WTC11 (cell line): ENCODE measurements at regions of chr12 and their contacts with region 1.

Region 1: DNA sequence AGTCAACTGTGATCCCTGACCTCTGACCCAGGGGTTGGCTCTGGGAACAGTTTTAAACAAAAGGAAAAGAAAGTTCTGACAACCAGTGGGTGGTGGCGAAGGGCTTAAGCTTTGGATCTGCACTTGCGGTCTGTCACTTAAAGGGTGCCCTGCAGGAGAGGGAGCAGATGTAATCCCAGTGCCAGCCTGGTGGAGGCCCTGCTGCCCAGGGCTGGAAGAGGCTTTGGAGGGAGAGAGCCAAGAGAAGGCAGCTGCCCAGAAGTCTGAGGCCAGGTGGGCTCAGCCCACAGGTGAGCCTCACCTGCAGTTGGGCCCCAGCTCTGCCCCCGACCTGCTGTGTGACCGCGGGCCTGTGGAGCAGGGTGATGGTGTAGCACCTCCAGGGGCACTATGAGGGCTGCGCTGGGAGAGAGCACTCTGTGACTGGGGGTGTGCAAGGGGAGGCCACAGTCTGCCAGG is 19.1 kb downstream of the SH2B3 start:
- DNase-seq: no peak
- ATAC-seq: peak; percentile 82
- H3K4me3 Mint-ChIP-seq: no peak overlapping the region
- H3K27ac Mint-ChIP-seq: peak overlapping the region; percentile 57
- H3K4me1 Mint-ChIP-seq: peaks cover 45% of the 10 kb centered on the region
- H3K27me3 Mint-ChIP-seq: no peaks in the 10 kb centered on the region
- CTCF ChIP-seq: 0 out of 2 replicates have a peak, but pooled peaks have one; percentile 11

Region 2: DNA sequence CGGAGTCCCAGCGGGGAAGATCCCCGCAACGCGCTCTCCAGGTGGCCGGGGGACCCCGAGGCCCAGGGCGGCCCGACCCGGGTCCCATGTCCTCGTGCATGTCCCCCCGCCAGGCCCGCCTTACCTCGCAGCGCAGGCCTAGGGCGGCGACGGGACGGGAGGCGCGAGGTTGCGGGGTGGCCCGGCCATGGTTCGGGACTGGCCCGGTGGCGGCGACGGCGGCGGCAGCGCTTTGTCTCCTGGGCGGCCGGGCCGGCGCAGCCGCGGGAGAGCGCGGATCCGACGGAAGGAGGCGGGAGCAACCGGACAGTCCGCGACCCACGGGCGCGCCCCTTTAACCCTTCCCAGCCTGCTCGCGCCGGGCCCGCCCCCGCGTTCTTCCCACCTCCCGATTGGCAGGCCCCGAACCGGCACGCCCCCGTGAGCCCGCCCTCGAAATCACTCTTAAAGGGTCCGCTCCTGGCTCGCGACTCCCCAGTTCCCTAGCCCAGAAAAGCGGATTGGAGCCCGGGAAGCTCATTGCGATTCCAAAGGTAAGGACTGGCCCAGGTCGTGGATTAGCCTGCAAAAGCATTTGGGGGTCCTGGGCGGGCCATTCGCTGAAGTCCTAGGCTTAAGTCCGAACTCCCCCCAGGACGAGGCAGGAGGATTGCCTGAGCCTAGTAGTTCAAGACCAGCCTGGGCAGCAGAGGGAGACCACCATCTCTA is 55.9 kb before region 1 on chr12 and contains the start of gene PHETA1:
- CTCF ChIA-PET with region 1: no interaction called
- POLR2A ChIA-PET with region 1: no interaction called
- DNase-seq: peak; percentile 95
- ATAC-seq: peak; percentile 94
- H3K4me3 Mint-ChIP-seq: peak within 1 kb of the TSS; percentile 72
- H3K27ac Mint-ChIP-seq: 0 out of 2 replicates have a peak within 1 kb of the TSS, but pooled peaks have one; percentile 27
- H3K4me1 Mint-ChIP-seq: peaks cover 10% of the 10 kb centered on the region
- H3K27me3 Mint-ChIP-seq: peaks cover 30% of the 10 kb centered on the region
- CTCF ChIP-seq: no peak
- total RNA-seq, gene PHETA1: 12.4 to 18.6 TPM (median 14.9 TPM) in 3 replicates

Region 3: GRCh38 chr12:111444925-111445725 is 20.3 kb after region 1 on chr12:
- CTCF ChIA-PET with region 1: interaction called, 24 read pairs
- POLR2A ChIA-PET with region 1: interaction called, 3 read pairs
- DNase-seq: no peak
- ATAC-seq: peak; percentile 25
- H3K4me3 Mint-ChIP-seq: no peak overlapping the region
- H3K27ac Mint-ChIP-seq: peak overlapping the region; percentile 94
- H3K4me1 Mint-ChIP-seq: peaks cover 22% of the 10 kb centered on the region
- H3K27me3 Mint-ChIP-seq: no peaks in the 10 kb centered on the region
- CTCF ChIP-seq: no peak

Region 4: DNA sequence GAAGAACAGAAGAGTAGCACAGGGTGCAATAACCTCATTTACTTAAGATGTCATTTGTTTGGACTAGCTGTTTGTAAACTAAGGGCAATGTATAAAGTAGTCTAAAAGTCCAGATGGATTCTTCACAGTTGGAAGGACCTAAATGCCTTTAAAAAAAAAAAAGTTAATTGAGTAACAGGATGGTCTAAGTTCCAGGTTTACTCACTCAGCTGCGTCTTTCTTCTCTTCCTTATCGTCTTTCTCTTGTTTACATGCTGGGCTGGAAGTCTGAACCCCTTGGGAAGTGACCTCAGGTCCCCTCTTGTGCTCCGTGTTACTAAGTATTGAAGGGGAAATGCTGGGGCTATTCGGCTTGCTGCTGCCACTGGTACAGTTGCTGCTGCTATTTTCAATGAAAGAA is 63.4 kb after region 1 on chr12:
- CTCF ChIA-PET with region 1: no interaction called
- POLR2A ChIA-PET with region 1: no interaction called
- DNase-seq: no peak
- ATAC-seq: no peak
- H3K4me3 Mint-ChIP-seq: no peak overlapping the region
- H3K27ac Mint-ChIP-seq: no peak overlapping the region
- H3K4me1 Mint-ChIP-seq: no peaks in the 10 kb centered on the region
- H3K27me3 Mint-ChIP-seq: no peaks in the 10 kb centered on the region
- CTCF ChIP-seq: no peak

Region 5: GRCh38 chr12:111546758-111547383 is 122.0 kb after region 1 on chr12:
- CTCF ChIA-PET with region 1: no interaction called
- POLR2A ChIA-PET with region 1: no interaction called
- DNase-seq: no peak
- ATAC-seq: no peak
- H3K4me3 Mint-ChIP-seq: no peak overlapping the region
- H3K27ac Mint-ChIP-seq: no peak overlapping the region
- H3K4me1 Mint-ChIP-seq: no peaks in the 10 kb centered on the region
- H3K27me3 Mint-ChIP-seq: no peaks in the 10 kb centered on the region
- CTCF ChIP-seq: no peak

Region 6: DNA sequence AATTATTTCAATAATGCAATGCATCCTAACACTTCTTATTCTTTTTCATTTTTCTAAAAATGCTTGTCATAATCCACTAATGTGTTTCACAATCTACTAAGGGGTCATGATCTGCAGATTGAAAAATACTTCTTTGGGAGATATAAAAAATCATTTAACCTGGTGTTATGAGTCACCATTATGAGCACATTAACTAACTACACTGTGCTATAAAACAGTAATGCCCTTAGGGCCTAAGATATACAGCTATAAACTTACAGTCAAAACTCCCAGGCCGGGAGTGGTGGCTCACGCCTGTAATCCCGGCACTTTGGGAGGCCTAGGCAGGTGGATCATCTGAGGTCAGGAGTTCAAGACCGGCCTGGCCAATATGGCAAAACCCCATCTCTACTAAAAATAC is 160.1 kb after region 1 on chr12:
- CTCF ChIA-PET with region 1: no interaction called
- POLR2A ChIA-PET with region 1: no interaction called
- DNase-seq: no peak
- ATAC-seq: no peak
- H3K4me3 Mint-ChIP-seq: no peak overlapping the region
- H3K27ac Mint-ChIP-seq: no peak overlapping the region
- H3K4me1 Mint-ChIP-seq: no peaks in the 10 kb centered on the region
- H3K27me3 Mint-ChIP-seq: no peaks in the 10 kb centered on the region
- CTCF ChIP-seq: no peak